GM10248 (cell line): ENCODE measurements at regions of chr20 and their contacts with region 1.

Region 1: GRCh38 chr20:1776681-1777475 is 118.3 kb upstream of the SIRPA start:
- DNase-seq: peak; percentile 84
- CTCF ChIP-seq: peak; percentile 89

Region 2: DNA sequence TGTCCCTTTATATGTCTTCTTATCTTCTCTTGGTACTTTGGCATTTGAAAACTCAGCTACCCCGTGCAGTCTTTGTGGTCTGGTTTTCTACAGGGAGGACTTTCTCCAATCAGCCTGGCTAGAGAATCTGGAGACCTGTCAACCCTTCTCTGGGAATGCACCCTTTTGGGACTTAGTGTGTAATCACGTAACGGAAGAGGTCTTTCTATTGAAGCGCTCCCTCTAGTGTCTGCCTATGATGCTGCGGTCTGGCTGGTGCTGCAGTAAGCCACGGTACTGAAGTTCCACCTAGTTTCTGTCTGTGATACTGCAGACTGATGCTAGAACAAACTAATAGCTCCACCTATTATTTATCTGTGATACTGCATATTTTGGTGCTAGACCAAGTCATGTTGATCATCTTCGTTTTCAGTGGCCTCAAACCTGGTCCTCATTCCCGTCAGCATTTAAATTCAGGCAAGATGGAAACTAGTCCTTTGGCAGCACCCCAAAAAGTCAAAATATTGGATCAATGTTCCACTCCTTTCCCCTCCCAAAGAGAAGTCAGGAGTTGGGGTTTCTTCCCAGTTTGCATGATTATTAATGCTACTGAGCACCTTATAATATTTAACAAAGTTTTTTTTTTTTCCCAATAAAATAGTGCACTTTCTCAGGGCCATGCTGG is 273.2 kb before region 1 on chr20:
- CTCF ChIA-PET with region 1: interaction called, 32 read pairs
- POLR2A ChIA-PET with region 1: no interaction called
- DNase-seq: peak; percentile 79
- CTCF ChIP-seq: peak; percentile 97

Region 3: GRCh38 chr20:1757072-1757471 is 19.8 kb before region 1 on chr20:
- CTCF ChIA-PET with region 1: interaction called, 13 read pairs
- POLR2A ChIA-PET with region 1: no interaction called
- DNase-seq: no peak
- CTCF ChIP-seq: no peak

Region 4: DNA sequence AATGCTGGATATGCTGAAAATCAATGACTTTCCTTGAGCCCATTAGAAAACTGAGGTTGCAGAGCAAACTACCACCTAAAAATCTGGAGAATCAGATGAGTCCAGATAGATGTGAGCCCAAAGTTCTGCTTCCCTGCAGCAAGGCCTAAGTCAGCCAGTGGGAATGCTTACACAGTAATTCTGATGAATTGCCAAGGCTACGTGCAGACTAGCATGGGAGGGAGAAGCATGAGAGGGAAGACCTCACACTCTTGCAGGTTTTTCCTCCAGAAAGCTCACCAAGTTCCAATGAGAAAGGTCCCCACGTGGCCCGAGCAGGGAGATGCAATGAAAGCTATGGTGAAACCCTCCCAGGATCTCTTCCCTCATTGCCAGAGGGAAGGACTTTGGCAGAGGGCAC is 13.5 kb after region 1 on chr20:
- CTCF ChIA-PET with region 1: interaction called, 22 read pairs
- POLR2A ChIA-PET with region 1: no interaction called
- DNase-seq: no peak
- CTCF ChIP-seq: no peak

Region 5: GRCh38 chr20:1810926-1811620 is 34.2 kb after region 1 on chr20:
- CTCF ChIA-PET with region 1: interaction called, 12 read pairs
- POLR2A ChIA-PET with region 1: no interaction called
- DNase-seq: no peak
- CTCF ChIP-seq: no peak

Region 6: GRCh38 chr20:1838556-1839279 is 61.8 kb after region 1 on chr20:
- CTCF ChIA-PET with region 1: no interaction called
- POLR2A ChIA-PET with region 1: no interaction called
- DNase-seq: no peak
- CTCF ChIP-seq: no peak